MCF 10A (cell line): ENCODE measurements at regions of chr4 and their contacts with region 1.

Region 1: GRCh38 chr4:86497980-86498862 is 95.9 kb upstream of the PTPN13 start:
- DNase-seq: peak; percentile 67
- H3K4me3 Mint-ChIP-seq: no peak overlapping the region
- H3K27ac Mint-ChIP-seq: no peak overlapping the region
- H3K4me1 Mint-ChIP-seq: peaks cover 6% of the 10 kb centered on the region
- H3K27me3 Mint-ChIP-seq: no peaks in the 10 kb centered on the region
- CTCF ChIP-seq: peak; percentile 62

Region 2: DNA sequence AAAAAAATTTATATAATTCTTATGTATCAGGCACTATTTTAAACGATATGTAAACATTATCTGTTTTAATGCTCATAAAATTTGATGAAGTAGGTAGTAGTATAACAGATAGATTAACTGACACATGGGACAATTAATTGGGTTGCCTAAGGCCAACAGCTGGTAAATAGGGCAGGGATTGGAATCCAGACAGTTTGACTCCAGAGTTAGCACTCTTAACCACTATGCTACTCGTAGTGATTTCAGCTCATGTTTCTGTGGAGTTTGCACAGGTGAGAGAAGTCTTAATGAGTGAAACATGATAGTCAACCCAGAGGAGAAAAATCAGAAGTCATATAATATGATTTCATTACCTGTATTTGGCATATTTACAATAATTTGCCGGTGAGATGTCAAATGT is 1405.7 kb before region 1 on chr4:
- CTCF ChIA-PET with region 1: no interaction called
- POLR2A ChIA-PET with region 1: no interaction called
- intact Hi-C with region 1: no loop called
- DNase-seq: no peak
- H3K4me3 Mint-ChIP-seq: no peak overlapping the region
- H3K27ac Mint-ChIP-seq: no peak overlapping the region
- H3K4me1 Mint-ChIP-seq: no peaks in the 10 kb centered on the region
- H3K27me3 Mint-ChIP-seq: no peaks in the 10 kb centered on the region
- CTCF ChIP-seq: no peak

Region 3: DNA sequence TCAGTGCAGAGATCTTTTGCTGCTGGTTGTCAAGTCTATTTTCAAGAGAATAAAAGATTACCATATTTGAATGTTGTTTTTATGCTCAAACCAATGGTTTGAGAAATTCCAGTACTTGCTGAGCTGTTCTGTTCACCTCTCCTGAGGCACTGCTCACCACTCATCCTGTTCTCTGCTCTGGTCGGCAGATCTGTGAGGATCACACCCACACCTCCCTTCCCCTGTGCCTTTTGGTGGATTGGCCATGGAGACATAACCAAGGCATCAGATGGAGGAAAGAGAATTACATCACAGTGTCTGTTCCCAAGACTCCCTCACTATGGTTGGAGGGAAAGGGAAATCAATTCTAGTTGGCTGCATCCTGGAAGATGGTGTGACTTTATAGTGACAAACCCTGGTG is 631.7 kb before region 1 on chr4:
- CTCF ChIA-PET with region 1: no interaction called
- POLR2A ChIA-PET with region 1: no interaction called
- intact Hi-C with region 1: no loop called
- DNase-seq: no peak
- H3K4me3 Mint-ChIP-seq: no peak overlapping the region
- H3K27ac Mint-ChIP-seq: no peak overlapping the region
- H3K4me1 Mint-ChIP-seq: no peaks in the 10 kb centered on the region
- H3K27me3 Mint-ChIP-seq: no peaks in the 10 kb centered on the region
- CTCF ChIP-seq: no peak

Region 4: DNA sequence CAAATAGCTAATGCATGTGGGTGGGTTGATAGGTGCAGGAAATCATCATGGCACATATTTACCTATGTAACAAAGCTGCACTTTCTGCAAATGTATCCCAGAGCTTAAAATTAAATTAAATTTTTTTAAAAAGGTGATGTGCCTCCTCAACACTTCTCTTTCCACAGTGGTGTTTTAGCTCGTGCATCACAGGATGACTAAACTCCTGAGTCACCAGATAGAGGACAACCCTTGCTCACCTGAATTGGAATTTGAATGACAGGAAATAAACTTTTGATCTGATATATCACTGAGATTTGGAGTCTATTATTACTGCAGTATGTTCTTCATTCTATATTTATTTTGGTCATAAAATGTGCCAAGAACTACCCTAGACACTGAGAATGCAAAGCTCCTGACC is 323.7 kb before region 1 on chr4:
- CTCF ChIA-PET with region 1: no interaction called
- POLR2A ChIA-PET with region 1: no interaction called
- intact Hi-C with region 1: no loop called
- DNase-seq: peak; percentile 5
- H3K4me3 Mint-ChIP-seq: no peak overlapping the region
- H3K27ac Mint-ChIP-seq: no peak overlapping the region
- H3K4me1 Mint-ChIP-seq: no peaks in the 10 kb centered on the region
- H3K27me3 Mint-ChIP-seq: no peaks in the 10 kb centered on the region
- CTCF ChIP-seq: no peak

Region 5: DNA sequence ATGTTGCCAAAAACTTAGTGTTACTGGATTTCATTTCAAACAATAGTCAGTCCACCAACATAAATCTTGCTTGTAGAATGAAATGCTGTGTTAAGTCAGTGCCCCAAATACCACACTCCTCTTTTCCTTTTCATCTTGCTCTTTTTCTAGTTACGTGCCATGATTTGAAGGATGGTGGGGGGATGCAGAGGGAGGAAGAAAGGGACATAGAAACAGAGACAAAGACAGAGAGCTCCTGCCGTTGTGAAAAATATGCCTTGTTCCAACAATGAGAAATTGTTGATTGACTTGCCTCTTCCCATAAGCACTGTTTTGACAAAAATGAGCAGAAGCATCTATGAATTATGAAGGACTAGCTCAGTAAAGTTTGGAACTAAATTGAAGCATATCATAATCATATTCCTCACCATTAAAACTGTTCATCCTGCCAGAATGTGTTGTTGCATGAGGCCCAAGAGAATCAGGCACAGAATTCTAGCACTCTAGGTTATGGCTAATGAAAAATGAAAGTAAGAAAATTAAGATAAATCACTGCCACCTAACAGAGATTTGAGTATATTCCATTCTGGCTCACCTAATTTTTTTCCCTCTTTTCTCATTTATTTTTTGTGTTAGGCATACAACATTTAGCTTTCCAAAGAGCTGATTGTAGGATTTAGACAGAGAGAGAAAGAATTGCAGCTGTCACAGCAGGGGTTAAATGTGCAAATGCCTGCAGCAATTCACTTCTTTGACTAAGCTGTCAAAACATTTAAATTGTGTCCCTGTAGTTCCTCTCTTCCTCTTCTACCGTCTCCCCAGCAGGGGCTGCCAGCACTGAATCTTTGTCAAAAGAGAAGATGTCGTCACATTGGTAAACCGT is 15.7 kb before region 1 on chr4:
- CTCF ChIA-PET with region 1: interaction called, 14 read pairs
- POLR2A ChIA-PET with region 1: interaction called, 3 read pairs
- intact Hi-C with region 1: no loop called
- DNase-seq: peak; percentile 37
- H3K4me3 Mint-ChIP-seq: no peak overlapping the region
- H3K27ac Mint-ChIP-seq: no peak overlapping the region
- H3K4me1 Mint-ChIP-seq: peaks cover 7% of the 10 kb centered on the region
- H3K27me3 Mint-ChIP-seq: no peaks in the 10 kb centered on the region
- CTCF ChIP-seq: no peak

Region 6: DNA sequence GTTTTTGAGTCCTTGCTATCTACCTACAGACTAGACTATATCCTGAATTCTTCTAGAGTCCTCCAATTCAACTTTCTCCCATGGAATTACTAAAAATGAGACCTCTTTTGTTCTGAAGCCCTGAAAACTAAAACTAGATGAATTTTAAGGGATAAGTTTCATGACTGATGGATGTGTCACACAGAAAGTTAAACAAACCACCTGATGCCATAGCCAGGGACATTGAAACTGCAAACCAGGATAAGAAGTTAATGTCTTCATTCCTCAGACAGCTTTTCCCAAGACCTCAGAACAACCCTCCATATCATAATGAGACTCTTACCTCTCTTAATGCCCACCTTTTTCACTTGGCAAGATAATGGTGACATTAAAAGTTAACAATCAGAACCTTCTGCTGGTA is 14.4 kb after region 1 on chr4:
- CTCF ChIA-PET with region 1: interaction called, 31 read pairs
- POLR2A ChIA-PET with region 1: interaction called, 3 read pairs
- intact Hi-C with region 1: no loop called
- DNase-seq: no peak
- H3K4me3 Mint-ChIP-seq: no peak overlapping the region
- H3K27ac Mint-ChIP-seq: no peak overlapping the region
- H3K4me1 Mint-ChIP-seq: no peaks in the 10 kb centered on the region
- H3K27me3 Mint-ChIP-seq: no peaks in the 10 kb centered on the region
- CTCF ChIP-seq: no peak

Region 7: DNA sequence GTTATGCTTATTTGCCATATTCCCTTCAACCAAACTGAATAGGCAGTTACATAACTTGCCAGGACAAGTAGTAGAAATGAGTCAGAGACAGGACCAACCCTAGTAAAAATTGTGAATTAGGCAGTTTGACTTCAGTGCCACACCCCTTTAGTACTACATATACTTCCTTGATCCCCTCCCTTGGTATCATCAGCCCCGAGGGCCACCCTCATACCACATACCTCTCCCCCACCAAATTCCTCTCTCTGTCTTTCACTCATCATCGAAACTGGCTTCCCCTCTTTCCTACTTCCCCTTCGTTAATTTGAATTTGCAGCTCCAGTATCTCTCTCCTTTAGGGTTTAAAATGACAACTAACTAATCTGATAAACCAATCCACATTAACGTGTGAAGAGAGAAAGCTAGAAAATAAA is 87.9 kb after region 1 on chr4:
- CTCF ChIA-PET with region 1: interaction called, 19 read pairs
- POLR2A ChIA-PET with region 1: no interaction called
- intact Hi-C with region 1: no loop called
- DNase-seq: peak; percentile 71
- H3K4me3 Mint-ChIP-seq: no peak overlapping the region
- H3K27ac Mint-ChIP-seq: no peak overlapping the region
- H3K4me1 Mint-ChIP-seq: peaks cover 31% of the 10 kb centered on the region
- H3K27me3 Mint-ChIP-seq: no peaks in the 10 kb centered on the region
- CTCF ChIP-seq: no peak

Region 8: GRCh38 chr4:86788826-86789225 is 290.6 kb after region 1 on chr4:
- CTCF ChIA-PET with region 1: interaction called, 11 read pairs
- POLR2A ChIA-PET with region 1: no interaction called
- intact Hi-C with region 1: no loop called
- DNase-seq: no peak
- H3K4me3 Mint-ChIP-seq: no peak overlapping the region
- H3K27ac Mint-ChIP-seq: no peak overlapping the region
- H3K4me1 Mint-ChIP-seq: no peaks in the 10 kb centered on the region
- H3K27me3 Mint-ChIP-seq: no peaks in the 10 kb centered on the region
- CTCF ChIP-seq: no peak

Region 9: GRCh38 chr4:87235020-87235671 is 736.9 kb after region 1 on chr4:
- CTCF ChIA-PET with region 1: interaction called, 4 read pairs
- POLR2A ChIA-PET with region 1: no interaction called
- intact Hi-C with region 1: loop called (anchors 5 kb)
- DNase-seq: no peak
- H3K4me3 Mint-ChIP-seq: peak overlapping the region; percentile 74
- H3K27ac Mint-ChIP-seq: peak overlapping the region; percentile 79
- H3K4me1 Mint-ChIP-seq: peaks cover 6% of the 10 kb centered on the region
- H3K27me3 Mint-ChIP-seq: no peaks in the 10 kb centered on the region
- CTCF ChIP-seq: no peak